ENCODE measurements at regions of chr4 and their contacts with region 1.

Region 1: DNA sequence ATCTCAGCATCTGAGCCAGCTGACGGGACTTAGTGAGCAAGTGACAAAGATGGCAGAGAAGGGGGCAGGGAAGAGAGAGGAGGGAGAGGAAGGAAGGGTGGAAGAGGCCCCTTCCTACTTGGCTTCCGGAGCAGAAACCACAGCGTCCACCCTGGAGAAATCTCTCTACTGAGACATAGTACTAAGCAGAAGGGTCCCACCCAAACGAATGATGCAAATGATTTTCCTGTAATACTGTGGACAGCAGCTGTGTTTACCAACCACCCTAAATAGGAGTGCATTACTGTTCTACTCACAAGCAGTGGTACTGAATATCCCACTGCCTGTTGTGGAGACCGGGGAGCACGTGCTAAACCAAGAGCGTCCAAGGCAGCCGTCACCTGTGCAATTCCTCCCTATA is 29.4 kb downstream of the DTHD1 start:
- DNase-seq: no peak
- ATAC-seq: no peak
- H3K4me3 Mint-ChIP-seq: no peak overlapping the region
- H3K27ac Mint-ChIP-seq: no peak overlapping the region
- H3K4me1 Mint-ChIP-seq: no peaks in the 10 kb centered on the region
- H3K27me3 Mint-ChIP-seq: no peaks in the 10 kb centered on the region; the same call in 1 of the 2 replicates
- CTCF ChIP-seq: no peak

Region 2: DNA sequence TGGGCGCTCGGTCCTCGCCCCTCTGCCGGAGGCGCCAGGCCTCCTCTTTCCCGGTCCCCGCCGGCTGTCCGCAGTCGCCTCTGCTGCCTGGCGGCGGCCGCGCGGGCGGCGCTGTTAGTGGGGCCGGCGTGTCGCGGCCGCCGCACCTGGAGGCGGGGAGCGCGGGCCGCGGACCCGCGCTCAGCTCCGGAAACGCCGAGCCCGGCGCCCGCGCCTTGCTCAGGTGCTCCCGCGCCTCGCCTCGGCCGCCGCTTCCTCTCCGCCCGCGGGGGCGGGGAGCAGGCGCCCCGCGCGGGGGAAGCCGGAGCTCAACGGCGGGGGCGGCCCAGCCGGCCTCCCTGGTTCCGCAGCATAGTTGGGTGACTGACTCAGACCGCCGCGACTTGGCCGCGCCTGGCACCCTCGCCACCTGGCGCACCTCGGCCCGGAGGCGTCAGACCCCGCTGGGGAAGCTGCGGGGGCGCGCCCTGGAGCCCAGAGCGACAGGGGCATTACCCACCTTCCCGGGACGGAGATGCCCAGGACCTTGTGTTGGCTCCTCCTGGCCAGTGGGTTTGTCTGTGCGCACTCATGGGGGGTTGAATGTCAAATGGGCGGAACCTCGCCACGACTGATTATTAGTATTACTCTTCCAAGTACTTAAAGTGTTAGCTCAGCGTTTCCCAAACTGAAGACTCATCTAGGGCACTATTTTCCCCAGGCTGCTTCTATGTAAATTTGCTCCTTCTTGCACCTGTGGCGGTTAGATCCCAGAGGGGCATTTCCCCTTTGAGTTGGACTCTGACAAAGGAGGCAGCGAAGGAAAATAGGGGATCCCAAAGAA is 66.3 kb before region 1 on chr4 and contains the start of gene ARAP2:
- CTCF ChIA-PET with region 1: no interaction called
- POLR2A ChIA-PET with region 1: interaction called, 10 read pairs
- DNase-seq: peak; percentile 51
- ATAC-seq: peak; percentile 86
- H3K4me3 Mint-ChIP-seq: peak within 1 kb of the TSS; percentile 82
- H3K27ac Mint-ChIP-seq: no peak within 1 kb of the TSS
- H3K4me1 Mint-ChIP-seq: peaks cover 11% of the 10 kb centered on the region
- H3K27me3 Mint-ChIP-seq: peaks cover 40% of the 10 kb centered on the region
- CTCF ChIP-seq: no peak
- total RNA-seq, gene ARAP2: 1.0 to 2.4 TPM (median 1.5 TPM) in 3 replicates

Region 3: DNA sequence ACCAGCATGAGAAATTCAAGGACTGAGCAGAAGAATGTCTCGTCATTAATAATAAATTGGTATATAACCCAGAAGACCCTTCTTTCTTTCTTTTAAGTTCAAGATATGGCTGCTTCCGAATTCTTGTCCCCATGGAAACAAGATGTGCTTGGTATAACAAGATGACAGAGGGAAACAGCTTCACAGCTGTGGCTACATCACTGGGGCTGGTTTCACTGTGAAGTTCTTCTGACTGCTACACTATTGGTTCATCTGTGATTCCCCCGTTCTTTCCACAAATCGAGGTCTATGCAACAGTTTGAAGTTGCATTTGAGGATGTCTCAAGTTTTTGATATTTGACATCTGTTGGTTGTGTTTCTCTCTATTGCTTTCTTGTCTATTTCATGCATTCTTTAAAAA is 41.7 kb before region 1 on chr4:
- CTCF ChIA-PET with region 1: no interaction called
- POLR2A ChIA-PET with region 1: no interaction called
- DNase-seq: no peak
- ATAC-seq: no peak
- H3K4me3 Mint-ChIP-seq: no peak overlapping the region
- H3K27ac Mint-ChIP-seq: no peak overlapping the region
- H3K4me1 Mint-ChIP-seq: peaks cover 15% of the 10 kb centered on the region
- H3K27me3 Mint-ChIP-seq: no peaks in the 10 kb centered on the region; the same call in 1 of the 2 replicates
- CTCF ChIP-seq: no peak

Measured in WTC11 (cell line).